ENCODE measurements at regions of chr7 and their contacts with region 1.

Region 1: GRCh38 chr7:128056901-128057300 is 25.7 kb upstream of the LRRC4 start:
- DNase-seq: no peak
- ATAC-seq: no peak
- H3K4me3 ChIP-seq: no peak overlapping the region
- H3K4me3 Mint-ChIP-seq: no peak overlapping the region
- H3K27ac ChIP-seq: no peak overlapping the region
- H3K27ac Mint-ChIP-seq: peak overlapping the region in 2 of 9 donors; percentile 32
- H3K4me1 ChIP-seq: peaks cover 23 to 58% of the 10 kb centered on the region in 2 donors
- H3K4me1 Mint-ChIP-seq: peaks cover 44 to 97% (median 78%) of the 10 kb centered on the region in 7 donors
- H3K27me3 ChIP-seq: no peaks in the 10 kb centered on the region
- H3K27me3 Mint-ChIP-seq: no peaks in the 10 kb centered on the region

Region 2: DNA sequence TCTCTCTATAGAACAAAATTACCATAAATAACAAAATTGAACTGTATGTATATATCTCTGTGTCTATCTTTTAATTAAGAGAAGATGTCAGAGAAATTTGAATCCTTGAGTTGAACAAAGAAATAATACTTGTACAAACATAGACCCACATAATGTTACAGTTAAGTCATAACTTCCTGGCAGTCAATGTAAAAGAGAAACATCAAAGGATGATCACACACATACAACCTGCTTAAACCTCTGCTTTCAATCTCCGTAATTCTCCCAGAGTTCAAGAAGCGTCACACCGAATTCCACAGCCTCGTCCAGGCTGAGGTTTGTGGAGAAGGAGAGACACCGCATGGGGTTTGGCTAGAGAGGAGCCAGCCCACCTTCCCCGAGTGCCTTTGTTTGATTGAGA is 14.5 kb after region 1 on chr7:
- CTCF ChIA-PET with region 1: interaction called, 4 read pairs
- POLR2A ChIA-PET with region 1: no interaction called
- intact Hi-C with region 1: loop called in 1 of 2 experiments (anchors 1 kb)
- DNase-seq: peak in 5 of 9 donors; percentile 14 to 26 (median 20)
- ATAC-seq: no peak
- H3K4me3 ChIP-seq: no peak overlapping the region
- H3K4me3 Mint-ChIP-seq: peak overlapping the region; percentile 20 to 88 (median 72)
- H3K27ac ChIP-seq: no peak overlapping the region
- H3K27ac Mint-ChIP-seq: peak overlapping the region in 8 of 9 donors; percentile 1 to 81 (median 44)
- H3K4me1 ChIP-seq: peaks cover 0 to 9% of the 10 kb centered on the region in 2 donors
- H3K4me1 Mint-ChIP-seq: peaks cover 23 to 64% (median 42%) of the 10 kb centered on the region in 7 donors
- H3K27me3 ChIP-seq: no peaks in the 10 kb centered on the region
- H3K27me3 Mint-ChIP-seq: no peaks in the 10 kb centered on the region

Region 3: DNA sequence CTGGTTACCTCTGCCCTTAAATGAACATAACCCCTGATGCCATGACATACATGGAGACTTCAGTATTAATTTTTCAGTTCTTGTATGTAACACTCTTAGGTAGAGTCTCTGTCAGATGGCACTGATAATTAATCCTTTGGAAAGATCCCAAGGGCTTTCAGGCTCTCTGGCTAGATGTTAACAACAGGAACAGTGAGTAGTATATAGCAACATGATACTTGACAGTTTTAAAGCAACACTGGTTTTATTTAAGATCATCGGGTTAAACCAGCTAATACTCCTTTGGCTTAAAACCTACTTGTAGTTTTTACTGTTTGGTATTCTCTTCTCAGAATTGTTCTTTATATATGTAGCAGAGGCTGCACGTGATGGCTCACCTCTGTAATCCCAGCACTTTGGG is 1195.2 kb after region 1 on chr7:
- CTCF ChIA-PET with region 1: no interaction called
- POLR2A ChIA-PET with region 1: no interaction called
- intact Hi-C with region 1: no loop called
- DNase-seq: no peak
- ATAC-seq: no peak
- H3K4me3 ChIP-seq: no peak overlapping the region
- H3K4me3 Mint-ChIP-seq: no peak overlapping the region
- H3K27ac ChIP-seq: no peak overlapping the region
- H3K27ac Mint-ChIP-seq: no peak overlapping the region
- H3K4me1 ChIP-seq: no peaks in the 10 kb centered on the region
- H3K4me1 Mint-ChIP-seq: peaks cover 0 to 34% (median 25%) of the 10 kb centered on the region in 7 donors
- H3K27me3 ChIP-seq: no peaks in the 10 kb centered on the region
- H3K27me3 Mint-ChIP-seq: peaks cover 0 to under 1% (median 0%) of the 10 kb centered on the region in 5 donors

Measured in naive thymus-derived CD4-positive, alpha-beta T cell (primary cell).